CD4-positive, alpha-beta memory T cell (primary cell): ENCODE measurements at regions of chr1 and their contacts with region 1.

Region 1: GRCh38 chr1:21189906-21190500 is 13.3 kb upstream of the EIF4G3 start:
- DNase-seq: no peak
- H3K4me3 ChIP-seq: no peak overlapping the region
- H3K4me3 Mint-ChIP-seq: no peak overlapping the region
- H3K27ac ChIP-seq: no peak overlapping the region
- H3K27ac Mint-ChIP-seq: no peak overlapping the region
- H3K4me1 ChIP-seq: no peaks in the 10 kb centered on the region
- H3K4me1 Mint-ChIP-seq: peaks cover 0 to 6% (median 3%) of the 10 kb centered on the region in 4 donors
- H3K27me3 ChIP-seq: no peaks in the 10 kb centered on the region
- H3K27me3 Mint-ChIP-seq: peaks cover 0 to 3% of the 10 kb centered on the region in 2 donors

Region 2: DNA sequence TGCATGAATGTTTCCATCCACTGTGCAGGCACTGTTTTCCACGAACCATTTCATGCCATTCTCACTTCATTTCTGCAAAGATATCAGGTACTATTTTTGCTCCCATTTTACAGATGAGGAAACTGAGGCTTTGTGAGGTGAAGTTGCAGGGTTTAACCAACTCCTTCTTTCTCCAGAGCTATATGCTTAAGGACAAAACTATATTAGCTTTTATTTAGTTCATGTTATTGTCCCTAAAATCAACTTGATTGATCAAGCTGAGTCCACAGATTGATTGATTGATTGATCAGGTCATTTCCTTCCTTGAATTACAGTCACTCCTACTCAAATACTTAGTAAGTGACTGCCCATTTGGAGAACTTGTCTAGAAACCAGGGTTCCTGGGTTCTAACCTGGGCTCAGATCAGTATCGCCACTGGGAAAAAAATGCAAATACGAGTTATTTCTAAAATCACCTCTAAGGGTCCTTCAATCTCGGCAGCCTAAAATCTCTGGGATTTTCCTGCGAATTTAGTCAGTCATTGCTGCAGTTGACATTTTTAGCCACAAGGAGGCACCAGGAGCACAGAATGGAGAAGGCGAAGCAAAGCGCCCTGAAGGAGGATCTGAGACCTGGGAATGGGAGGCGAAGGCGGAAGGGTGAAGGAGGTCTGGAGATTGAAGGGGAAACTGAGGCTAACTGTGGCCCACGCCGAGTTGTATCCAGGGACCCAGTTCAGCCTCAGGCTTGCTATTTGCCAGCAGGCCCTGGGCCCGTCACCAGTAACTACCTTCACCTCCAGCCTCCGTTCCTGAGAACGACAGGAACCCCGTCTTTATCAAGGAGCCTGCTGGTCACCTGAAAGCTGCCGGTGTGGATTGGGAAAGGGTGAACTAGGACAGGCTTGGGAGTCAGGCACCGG is 667.8 kb before region 1 on chr1:
- CTCF ChIA-PET with region 1: interaction called, 4 read pairs
- POLR2A ChIA-PET with region 1: no interaction called
- intact Hi-C with region 1: loop called (anchors 10 kb)
- DNase-seq: peak; percentile 44 to 63 (median 59)
- H3K4me3 ChIP-seq: no peak overlapping the region
- H3K4me3 Mint-ChIP-seq: no peak overlapping the region
- H3K27ac ChIP-seq: no peak overlapping the region
- H3K27ac Mint-ChIP-seq: no peak overlapping the region
- H3K4me1 ChIP-seq: no peaks in the 10 kb centered on the region
- H3K4me1 Mint-ChIP-seq: peaks cover 0 to 3% (median 1%) of the 10 kb centered on the region in 4 donors
- H3K27me3 ChIP-seq: no peaks in the 10 kb centered on the region
- H3K27me3 Mint-ChIP-seq: peaks cover 6 to 21% of the 10 kb centered on the region in 2 donors

Region 3: GRCh38 chr1:20696397-20697329 is 493.3 kb before region 1 on chr1:
- CTCF ChIA-PET with region 1: interaction called, 168 read pairs
- POLR2A ChIA-PET with region 1: interaction called, 5 read pairs
- intact Hi-C with region 1: no loop called
- DNase-seq: peak; percentile 60 to 71 (median 68)
- H3K4me3 ChIP-seq: peak overlapping the region; percentile 84 to 90
- H3K4me3 Mint-ChIP-seq: peak overlapping the region; percentile 87 to 95 (median 89)
- H3K27ac ChIP-seq: peak overlapping the region; percentile 46
- H3K27ac Mint-ChIP-seq: peak overlapping the region in 6 of 7 donors; percentile 22 to 92 (median 68)
- H3K4me1 ChIP-seq: peaks cover 10% of the 10 kb centered on the region
- H3K4me1 Mint-ChIP-seq: peaks cover 2 to 12% (median 6%) of the 10 kb centered on the region in 4 donors
- H3K27me3 ChIP-seq: no peaks in the 10 kb centered on the region
- H3K27me3 Mint-ChIP-seq: peaks cover 0 to 3% of the 10 kb centered on the region in 2 donors

Region 4: GRCh38 chr1:21072721-21073120 is 117.3 kb before region 1 on chr1:
- CTCF ChIA-PET with region 1: no interaction called
- POLR2A ChIA-PET with region 1: no interaction called
- intact Hi-C with region 1: no loop called
- DNase-seq: no peak
- H3K4me3 ChIP-seq: no peak overlapping the region
- H3K4me3 Mint-ChIP-seq: no peak overlapping the region
- H3K27ac ChIP-seq: no peak overlapping the region
- H3K27ac Mint-ChIP-seq: no peak overlapping the region
- H3K4me1 ChIP-seq: no peaks in the 10 kb centered on the region
- H3K4me1 Mint-ChIP-seq: peaks cover 0 to 3% (median 1%) of the 10 kb centered on the region in 4 donors
- H3K27me3 ChIP-seq: no peaks in the 10 kb centered on the region
- H3K27me3 Mint-ChIP-seq: no peaks in the 10 kb centered on the region